ENCODE measurements at regions of chr2 and their contacts with region 1.

Region 1: GRCh38 chr2:73233154-73233931 is at the start of gene PRADC1:
- DNase-seq: peak; percentile 99
- H3K4me3 ChIP-seq: peak within 1 kb of the TSS; percentile 69 to 92 (median 84)
- H3K27ac ChIP-seq: peak within 1 kb of the TSS; percentile 92 to 99 (median 98)
- H3K4me1 ChIP-seq: peaks cover 16 to 32% (median 24%) of the 10 kb centered on the region in 4 donors
- H3K27me3 ChIP-seq: no peaks in the 10 kb centered on the region
- CTCF ChIP-seq: no peak
- EP300 ChIP-seq: no peak
- POLR2A ChIP-seq: peak; percentile 78
- total RNA-seq, gene PRADC1: 44.3 to 77.1 (median 61.8) TPM

Region 2: DNA sequence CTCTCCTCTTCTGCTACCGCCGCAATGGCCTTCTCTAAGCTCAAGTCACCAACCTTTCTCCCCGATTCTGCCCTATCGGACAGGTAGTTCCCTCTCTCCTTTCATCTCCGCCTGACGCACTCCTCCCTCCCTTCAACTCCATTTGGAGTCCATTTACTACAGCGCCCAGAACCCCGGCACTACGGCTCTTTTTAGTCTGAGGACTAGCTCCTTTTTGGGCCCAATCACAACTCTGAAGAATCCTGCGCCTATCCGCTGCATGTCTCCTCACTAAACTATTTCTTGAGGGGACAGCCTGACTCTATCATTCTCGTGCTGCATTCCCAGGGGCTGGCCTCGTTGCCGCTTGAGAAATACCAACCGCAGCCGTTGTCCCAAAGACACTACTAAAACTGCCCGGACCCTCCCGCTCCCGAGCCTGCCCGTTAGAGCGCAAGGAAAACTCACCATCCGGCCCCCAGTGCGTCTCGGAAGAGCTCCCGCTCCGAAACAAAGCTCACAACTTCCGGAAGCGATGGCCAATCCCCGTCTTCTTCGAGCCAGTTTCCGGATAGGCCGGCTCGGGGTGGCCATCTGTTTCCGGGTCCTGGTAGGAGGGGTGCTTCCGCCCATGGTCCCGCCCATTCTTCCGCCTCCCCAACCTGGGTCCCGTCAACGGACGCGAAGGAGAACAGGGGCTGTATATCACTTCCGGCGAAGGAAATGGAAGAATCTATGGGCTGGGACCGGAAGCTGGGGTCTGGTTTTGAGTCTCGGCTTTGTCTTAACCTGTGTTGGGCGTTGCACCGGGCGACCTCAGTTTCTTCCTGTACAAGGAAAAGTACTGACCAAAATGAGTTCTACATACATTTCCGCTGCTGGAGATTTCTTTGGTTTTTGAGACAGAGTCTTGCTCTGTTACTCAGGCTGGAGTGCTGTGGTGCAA is 503.8 kb after region 1 on chr2 and contains the start of gene TPRKB:
- in situ Hi-C with region 1: loop called in 1 of 4 experiments (anchors 25 kb)
- intact Hi-C with region 1: no loop called
- DNase-seq: peak; percentile 96
- H3K4me3 ChIP-seq: peak within 1 kb of the TSS; percentile 59 to 82 (median 64)
- H3K27ac ChIP-seq: peak within 1 kb of the TSS; percentile 68 to 82 (median 78)
- H3K4me1 ChIP-seq: peaks cover 8 to 16% (median 9%) of the 10 kb centered on the region in 4 donors
- H3K27me3 ChIP-seq: no peaks in the 10 kb centered on the region
- CTCF ChIP-seq: no peak
- EP300 ChIP-seq: peak; percentile 41
- POLR2A ChIP-seq: peak; percentile 73
- total RNA-seq, gene TPRKB: 10.5 to 76.2 (median 36.5) TPM

Measured in transverse colon (tissue), 4 donors.